Endothelial cell of umbilical vein (primary cell): ENCODE measurements at regions of chr17 and their contacts with region 1.

Region 1: GRCh38 chr17:35764123-35764991 is 3.7 kb downstream of the C17orf50 start:
- DNase-seq: peak; percentile 90
- H3K4me3 ChIP-seq: peak overlapping the region; percentile 19 to 50 (median 36)
- H3K27ac ChIP-seq: no peak overlapping the region
- H3K4me1 ChIP-seq: peaks cover 7% of the 10 kb centered on the region
- H3K27me3 ChIP-seq: peaks cover 1 to 2% of the 10 kb centered on the region in 2 experiments
- CTCF ChIP-seq: peak; percentile 98 to 99
- POLR2A ChIP-seq: peak; percentile 49

Region 2: GRCh38 chr17:35726127-35726952 is 38.0 kb before region 1 on chr17:
- CTCF ChIA-PET with region 1: no interaction called
- POLR2A ChIA-PET with region 1: no interaction called
- dilution Hi-C with region 1: no loop called
- intact Hi-C with region 1: no loop called
- DNase-seq: no peak
- H3K4me3 ChIP-seq: no peak overlapping the region
- H3K27ac ChIP-seq: no peak overlapping the region
- H3K4me1 ChIP-seq: peaks cover 4% of the 10 kb centered on the region
- H3K27me3 ChIP-seq: no peaks in the 10 kb centered on the region
- CTCF ChIP-seq: no peak
- POLR2A ChIP-seq: no peak

Region 3: GRCh38 chr17:35752945-35753764 is 11.2 kb before region 1 on chr17 and contains the start of gene GAS2L2:
- CTCF ChIA-PET with region 1: interaction called, 51 read pairs
- POLR2A ChIA-PET with region 1: no interaction called
- dilution Hi-C with region 1: no loop called
- intact Hi-C with region 1: no loop called
- DNase-seq: no peak
- H3K4me3 ChIP-seq: no peak within 1 kb of the TSS
- H3K27ac ChIP-seq: no peak within 1 kb of the TSS
- H3K4me1 ChIP-seq: no peaks in the 10 kb centered on the region
- H3K27me3 ChIP-seq: peaks cover 27 to 30% of the 10 kb centered on the region in 2 experiments
- CTCF ChIP-seq: no peak
- POLR2A ChIP-seq: no peak
- total RNA-seq, gene GAS2L2: not detected in 2 replicates

Region 4: GRCh38 chr17:35788504-35789368 is 24.4 kb after region 1 on chr17:
- CTCF ChIA-PET with region 1: interaction called, 68 read pairs
- POLR2A ChIA-PET with region 1: no interaction called
- dilution Hi-C with region 1: no loop called
- intact Hi-C with region 1: no loop called
- DNase-seq: no peak
- H3K4me3 ChIP-seq: no peak overlapping the region
- H3K27ac ChIP-seq: no peak overlapping the region
- H3K4me1 ChIP-seq: no peaks in the 10 kb centered on the region
- H3K27me3 ChIP-seq: peaks cover 33 to 40% of the 10 kb centered on the region in 2 experiments
- CTCF ChIP-seq: no peak
- POLR2A ChIP-seq: no peak

Region 5: GRCh38 chr17:35801583-35802224 is 37.3 kb after region 1 on chr17:
- CTCF ChIA-PET with region 1: interaction called, 453 read pairs
- POLR2A ChIA-PET with region 1: no interaction called
- dilution Hi-C with region 1: no loop called
- intact Hi-C with region 1: loop called (anchors 1 kb)
- DNase-seq: peak; percentile 99
- H3K4me3 ChIP-seq: no peak overlapping the region
- H3K27ac ChIP-seq: peak overlapping the region; percentile 53
- H3K4me1 ChIP-seq: peaks cover 28% of the 10 kb centered on the region
- H3K27me3 ChIP-seq: peaks cover 8 to 14% of the 10 kb centered on the region in 2 experiments
- CTCF ChIP-seq: no peak
- POLR2A ChIP-seq: peak; percentile 30

Region 6: DNA sequence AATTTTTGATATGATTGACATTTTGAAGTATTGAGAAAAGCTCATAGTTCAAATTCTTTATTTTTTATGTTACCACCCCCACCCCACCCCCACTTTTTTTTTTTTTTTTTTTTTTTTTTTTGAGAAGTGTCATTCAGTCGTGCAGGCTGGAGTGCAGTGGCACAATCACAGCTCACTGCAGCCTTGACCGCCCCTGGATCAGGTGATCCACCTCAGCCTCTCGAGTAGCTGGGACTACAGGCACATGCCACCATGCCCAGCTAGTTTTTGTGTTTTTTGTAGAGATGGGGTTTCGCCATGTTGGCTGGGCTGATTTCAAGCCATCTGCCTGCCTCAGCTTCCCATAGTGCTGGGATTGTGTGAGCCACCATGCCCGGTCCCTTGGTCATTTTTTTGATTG is 52.4 kb after region 1 on chr17:
- CTCF ChIA-PET with region 1: interaction called, 453 read pairs
- POLR2A ChIA-PET with region 1: interaction called, 3 read pairs
- dilution Hi-C with region 1: no loop called
- intact Hi-C with region 1: no loop called
- DNase-seq: no peak
- H3K4me3 ChIP-seq: no peak overlapping the region
- H3K27ac ChIP-seq: no peak overlapping the region
- H3K4me1 ChIP-seq: peaks cover 14% of the 10 kb centered on the region
- H3K27me3 ChIP-seq: no peaks in the 10 kb centered on the region
- CTCF ChIP-seq: no peak
- POLR2A ChIP-seq: no peak